ENCODE measurements at regions of chr15 and their contacts with region 1.

Region 1: GRCh38 chr15:29269485-29270168 is at the start of gene NSMCE3:
- ATAC-seq: peak; percentile 66 to 97 (median 96)
- H3K4me3 ChIP-seq: peak within 1 kb of the TSS; percentile 67 to 99 (median 97)
- H3K27ac ChIP-seq: peak within 1 kb of the TSS; percentile 94 to 95
- H3K4me1 ChIP-seq: peaks cover 6 to 22% of the 10 kb centered on the region in 2 donors
- total RNA-seq, gene NSMCE3: 11.0 to 95.5 (median 13.7) TPM

Region 2: DNA sequence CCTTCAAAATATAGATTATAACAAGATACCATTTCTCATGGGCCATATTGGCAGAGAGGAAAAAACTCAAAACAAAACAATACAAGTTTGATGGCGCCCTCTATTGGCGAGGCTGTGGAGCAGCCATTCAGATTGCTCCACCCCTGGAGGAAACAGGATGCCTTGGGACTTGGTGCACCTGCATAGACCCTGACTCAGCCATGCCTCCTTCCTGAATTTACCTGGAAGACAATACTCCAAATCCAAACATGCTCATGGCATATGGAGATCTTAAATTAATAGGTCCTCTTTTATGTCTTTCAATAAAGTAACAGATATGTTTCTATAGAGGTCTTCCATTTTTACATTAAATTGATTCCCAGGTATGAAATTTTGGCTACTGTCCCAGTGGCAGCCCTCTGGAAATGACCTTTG is 293.9 kb before region 1 on chr15:
- in situ Hi-C with region 1: loop called in 1 of 9 experiments (anchors 25 kb)
- ATAC-seq: peak in 2 of 8 experiments; percentile 5 to 42
- H3K4me3 ChIP-seq: no peak overlapping the region
- H3K27ac ChIP-seq: no peak overlapping the region
- H3K4me1 ChIP-seq: peaks cover 12% of the 10 kb centered on the region in 2 donors

Region 3: DNA sequence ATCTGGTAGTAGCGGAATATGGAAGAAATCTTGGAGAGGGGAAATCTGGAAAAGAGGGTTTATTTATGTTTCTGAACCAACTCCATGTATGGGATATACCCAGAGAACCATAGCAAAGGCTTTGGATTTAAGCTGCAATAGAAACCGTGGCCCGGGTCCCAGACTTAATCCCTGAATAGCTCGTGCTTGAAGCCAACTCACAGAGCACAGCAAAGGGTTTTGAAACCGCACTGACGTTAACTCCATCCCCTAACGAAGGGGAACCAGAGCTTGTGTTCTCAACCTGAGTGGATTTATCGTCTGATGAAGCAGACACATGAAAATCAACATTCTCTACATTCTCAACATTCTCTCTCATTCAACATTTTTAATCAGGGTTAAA is 229.3 kb before region 1 on chr15:
- in situ Hi-C with region 1: no loop called
- ATAC-seq: peak in 1 of 8 experiments; percentile 66
- H3K4me3 ChIP-seq: no peak overlapping the region
- H3K27ac ChIP-seq: no peak overlapping the region
- H3K4me1 ChIP-seq: peaks cover 44 to 48% of the 10 kb centered on the region in 2 donors

Region 4: DNA sequence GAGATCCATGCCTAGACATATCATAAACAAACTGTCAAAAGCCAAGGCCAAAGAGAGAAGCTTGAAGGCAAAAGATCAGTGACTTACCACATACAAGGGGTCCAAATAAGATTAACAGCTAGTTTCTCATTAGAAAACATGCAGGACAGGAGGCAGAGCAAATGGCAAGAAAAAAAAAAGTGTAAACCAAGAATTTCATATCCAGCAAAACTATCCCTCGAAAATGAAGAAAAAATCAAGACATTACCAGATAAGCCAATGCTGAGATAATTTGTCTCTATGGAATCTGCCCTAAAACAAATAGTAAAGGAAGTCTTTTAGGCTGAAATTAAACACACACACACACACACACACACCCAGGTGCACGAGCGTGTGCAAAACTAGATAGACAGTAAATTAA is 99.6 kb after region 1 on chr15:
- in situ Hi-C with region 1: no loop called
- ATAC-seq: no peak
- H3K4me3 ChIP-seq: no peak overlapping the region
- H3K27ac ChIP-seq: no peak overlapping the region
- H3K4me1 ChIP-seq: peaks cover 1 to 5% of the 10 kb centered on the region in 2 donors